Transverse colon (tissue), 4 donors: ENCODE measurements at regions of chr5 and their contacts with region 1.

Region 1: DNA sequence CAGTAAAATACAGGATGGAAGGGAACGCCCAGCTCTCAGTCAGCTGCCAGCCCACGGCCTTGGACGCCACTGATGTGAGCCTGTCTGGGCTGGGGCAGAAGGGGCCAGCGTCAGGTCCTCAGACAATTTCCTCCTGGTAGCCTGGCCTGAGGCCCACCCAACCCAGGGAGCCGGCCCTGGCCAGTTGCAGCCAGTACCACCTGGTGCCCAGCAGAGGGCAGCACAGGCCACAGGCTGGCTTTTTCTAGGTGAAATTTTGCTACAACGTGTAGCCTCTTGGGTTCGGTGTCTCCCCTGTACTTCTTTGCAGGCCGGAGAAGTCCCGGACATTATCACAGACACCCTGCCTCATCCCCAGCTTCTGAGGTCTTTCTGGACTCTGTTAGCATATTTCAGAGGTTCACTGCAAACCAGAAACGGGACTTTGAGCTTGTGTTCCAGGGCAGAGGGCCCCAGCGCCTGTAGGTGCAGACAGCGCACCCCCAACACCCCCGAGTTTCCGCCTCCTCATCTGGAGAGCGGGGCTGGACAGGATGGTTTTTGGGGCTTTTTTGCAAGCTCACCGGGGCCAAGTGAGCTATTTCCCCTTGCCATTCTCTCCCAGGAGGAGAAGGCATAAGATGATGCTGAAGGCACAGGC is 45.9 kb upstream of the KCNMB1 start:
- DNase-seq: peak; percentile 43
- H3K4me3 ChIP-seq: no peak overlapping the region
- H3K27ac ChIP-seq: no peak overlapping the region
- H3K4me1 ChIP-seq: no peaks in the 10 kb centered on the region
- H3K27me3 ChIP-seq: peaks cover 3% of the 10 kb centered on the region
- CTCF ChIP-seq: peak; percentile 79 to 95 (median 94)
- EP300 ChIP-seq: no peak
- POLR2A ChIP-seq: no peak

Region 2: GRCh38 chr5:170151097-170151831 is 283.8 kb before region 1 on chr5:
- in situ Hi-C with region 1: no loop called
- intact Hi-C with region 1: no loop called
- DNase-seq: no peak
- H3K4me3 ChIP-seq: no peak overlapping the region
- H3K27ac ChIP-seq: no peak overlapping the region
- H3K4me1 ChIP-seq: no peaks in the 10 kb centered on the region
- H3K27me3 ChIP-seq: no peaks in the 10 kb centered on the region
- CTCF ChIP-seq: no peak
- EP300 ChIP-seq: no peak
- POLR2A ChIP-seq: no peak

Region 3: DNA sequence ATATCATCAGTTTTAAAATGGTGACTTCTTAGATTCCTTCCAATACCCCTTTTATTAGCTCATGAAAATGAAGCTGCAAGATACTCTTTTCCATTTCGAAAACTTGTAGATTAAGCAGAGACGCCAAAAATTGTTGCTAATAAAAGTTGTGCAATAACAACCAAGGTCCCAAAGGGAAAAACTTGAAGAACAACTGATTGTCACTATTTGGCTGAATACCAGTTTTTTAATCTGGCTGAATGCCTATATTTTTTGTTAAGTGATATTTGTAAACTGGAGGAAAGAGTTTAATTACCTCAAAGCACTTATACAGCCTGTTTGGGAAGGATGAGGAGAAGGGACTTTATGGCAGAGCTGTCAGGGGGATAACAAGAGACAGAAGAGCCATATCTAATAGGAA is 187.7 kb before region 1 on chr5:
- in situ Hi-C with region 1: no loop called
- intact Hi-C with region 1: no loop called
- DNase-seq: no peak
- H3K4me3 ChIP-seq: no peak overlapping the region
- H3K27ac ChIP-seq: no peak overlapping the region
- H3K4me1 ChIP-seq: peaks cover 0 to 3% (median 0%) of the 10 kb centered on the region in 4 donors
- H3K27me3 ChIP-seq: no peaks in the 10 kb centered on the region
- CTCF ChIP-seq: no peak
- EP300 ChIP-seq: no peak
- POLR2A ChIP-seq: no peak

Region 4: DNA sequence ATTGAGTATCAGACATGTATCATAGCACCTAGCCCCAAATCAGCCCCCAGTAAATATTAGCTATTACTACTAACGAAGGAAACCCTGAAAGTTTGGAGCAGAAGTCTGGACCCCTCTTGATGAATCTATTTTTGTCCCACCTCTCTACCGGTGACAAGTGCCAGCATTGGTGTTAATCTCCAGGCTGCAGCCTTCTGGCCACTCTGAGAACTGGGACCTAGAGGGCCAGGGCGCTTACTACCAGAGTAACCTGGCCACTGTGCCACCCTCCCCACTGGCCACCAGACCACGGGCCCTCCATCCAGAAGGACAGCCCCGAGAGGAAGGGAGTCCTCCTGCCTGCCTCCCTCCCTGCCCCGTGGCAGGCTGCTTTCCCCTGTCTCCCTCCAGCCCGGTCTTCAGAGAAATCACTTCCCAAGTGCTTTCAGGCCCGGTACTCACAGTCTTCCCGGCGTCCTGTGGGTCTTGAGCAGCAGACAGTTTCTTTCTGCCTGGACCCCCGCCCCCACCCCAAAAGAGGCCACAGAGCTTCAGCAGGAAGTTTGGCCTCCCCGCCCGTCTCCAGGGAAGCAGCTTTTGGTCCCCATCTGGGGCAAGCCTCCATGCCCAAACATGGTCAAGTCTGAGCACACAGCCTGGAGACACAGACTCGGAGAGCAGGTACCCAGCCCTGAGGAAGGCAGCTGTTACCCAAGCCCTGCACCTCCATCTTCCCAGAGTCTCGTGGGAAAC is 46.1 kb before region 1 on chr5 and contains the start of gene KCNMB1:
- in situ Hi-C with region 1: no loop called
- intact Hi-C with region 1: loop called (anchors 1 kb)
- DNase-seq: no peak
- H3K4me3 ChIP-seq: peak within 1 kb of the TSS; percentile 7 to 40 (median 30)
- H3K27ac ChIP-seq: peak within 1 kb of the TSS; percentile 74 to 91 (median 80)
- H3K4me1 ChIP-seq: peaks cover 0 to 5% (median 2%) of the 10 kb centered on the region in 4 donors
- H3K27me3 ChIP-seq: no peaks in the 10 kb centered on the region
- CTCF ChIP-seq: no peak
- EP300 ChIP-seq: no peak
- POLR2A ChIP-seq: no peak
- total RNA-seq, gene KCNMB1: 6.0 to 17.2 (median 8.0) TPM

Region 5: GRCh38 chr5:170603578-170604565 is 168.8 kb after region 1 on chr5:
- in situ Hi-C with region 1: loop called in 1 of 4 experiments (anchors 25 kb)
- intact Hi-C with region 1: no loop called
- DNase-seq: peak; percentile 30
- H3K4me3 ChIP-seq: no peak overlapping the region
- H3K27ac ChIP-seq: no peak overlapping the region
- H3K4me1 ChIP-seq: no peaks in the 10 kb centered on the region
- H3K27me3 ChIP-seq: no peaks in the 10 kb centered on the region
- CTCF ChIP-seq: peak; percentile 38 to 66 (median 55)
- EP300 ChIP-seq: no peak
- POLR2A ChIP-seq: no peak

Region 6: GRCh38 chr5:170623576-170624181 is 188.6 kb after region 1 on chr5:
- in situ Hi-C with region 1: loop called in 3 of 4 experiments (anchors 10 to 25 kb)
- intact Hi-C with region 1: no loop called
- DNase-seq: no peak
- H3K4me3 ChIP-seq: no peak overlapping the region
- H3K27ac ChIP-seq: no peak overlapping the region
- H3K4me1 ChIP-seq: no peaks in the 10 kb centered on the region
- H3K27me3 ChIP-seq: no peaks in the 10 kb centered on the region
- CTCF ChIP-seq: peak in 4 of 5 experiments; percentile 39 to 50 (median 46)
- EP300 ChIP-seq: no peak
- POLR2A ChIP-seq: no peak

Region 7: DNA sequence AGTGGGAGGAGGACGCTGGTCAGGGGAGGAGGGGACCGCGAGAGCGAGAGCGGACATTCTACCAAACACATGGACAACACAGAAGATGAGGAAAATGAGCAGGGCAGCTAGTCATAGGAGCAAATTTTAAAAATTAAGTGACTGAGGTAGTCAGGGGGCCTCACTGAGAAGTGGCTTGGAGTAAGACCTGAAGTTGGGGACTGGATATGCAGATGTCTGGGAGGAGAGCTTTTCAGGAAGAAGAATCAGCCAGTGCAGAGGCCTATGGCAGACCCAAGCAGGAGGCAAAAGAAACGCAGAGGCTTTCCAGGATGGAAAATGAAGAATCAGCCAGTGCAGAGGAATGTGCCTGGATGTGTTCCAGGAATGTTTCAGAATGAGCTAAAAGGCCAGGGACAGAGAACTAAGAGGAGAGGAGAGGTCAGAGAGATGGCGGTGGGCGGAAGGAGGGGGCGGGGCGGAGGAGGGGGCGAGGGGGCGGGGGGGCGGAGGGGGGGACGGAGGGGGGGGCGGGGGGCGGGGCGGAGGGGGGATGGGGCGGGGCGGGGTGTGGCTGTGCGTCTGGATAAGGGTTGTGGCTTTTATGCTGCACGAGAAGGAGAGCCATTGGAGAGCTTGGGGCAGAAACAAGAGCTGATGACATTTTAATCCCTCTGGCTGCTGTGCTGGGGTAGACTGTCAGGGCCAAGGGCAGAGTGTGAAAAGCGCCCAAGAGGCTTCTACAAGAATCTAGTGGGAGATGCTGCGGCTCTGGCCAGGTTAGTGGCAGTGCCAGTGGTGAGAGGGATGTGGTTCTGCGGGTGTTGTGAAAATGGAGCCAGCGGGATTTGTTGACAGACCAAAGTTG is 198.4 kb after region 1 on chr5:
- in situ Hi-C with region 1: loop called in 2 of 4 experiments (anchors 10 kb)
- intact Hi-C with region 1: loop called (anchors 1 kb)
- DNase-seq: peak; percentile 27
- H3K4me3 ChIP-seq: peak overlapping the region in 2 of 4 donors; percentile 6 to 25
- H3K27ac ChIP-seq: peak overlapping the region; percentile 69 to 89 (median 78)
- H3K4me1 ChIP-seq: peaks cover 0 to 19% (median 12%) of the 10 kb centered on the region in 4 donors
- H3K27me3 ChIP-seq: no peaks in the 10 kb centered on the region
- CTCF ChIP-seq: no peak
- EP300 ChIP-seq: no peak
- POLR2A ChIP-seq: no peak